ENCODE measurements at regions of chr13 and their contacts with region 1.

Region 1: DNA sequence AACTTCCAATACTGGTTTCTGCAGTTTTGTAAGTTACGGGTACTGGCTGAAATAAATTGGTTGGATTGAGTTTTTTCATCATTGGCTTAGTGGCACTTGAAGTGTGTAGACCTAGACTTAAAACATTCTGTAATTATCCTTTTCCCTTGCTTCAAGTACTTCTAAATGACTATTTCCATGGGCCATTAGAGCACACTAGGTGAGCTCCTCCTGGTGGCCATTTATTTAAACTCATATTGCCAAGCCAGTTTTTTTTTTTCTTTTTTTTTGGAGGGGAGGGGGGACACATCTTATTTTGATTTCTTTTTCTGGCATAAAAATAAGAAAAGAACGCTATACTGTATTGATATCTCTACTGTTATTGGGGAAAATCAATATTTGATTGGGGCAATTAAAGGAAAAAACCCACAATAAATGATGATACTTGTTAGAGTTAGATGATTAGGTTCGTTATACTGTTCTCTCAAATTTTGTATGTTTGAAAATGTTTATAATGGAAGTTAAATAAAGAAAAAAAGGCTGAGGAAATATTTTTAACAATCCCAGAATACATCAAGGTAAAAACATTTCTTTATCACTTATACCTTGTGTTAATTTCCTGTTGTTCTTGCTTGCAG is 82.9 kb downstream of the PDS5B start:
- DNase-seq: no peak
- H3K4me3 ChIP-seq: no peak overlapping the region
- H3K27ac ChIP-seq: no peak overlapping the region
- H3K27me3 ChIP-seq: no peaks in the 10 kb centered on the region
- CTCF ChIP-seq: peak; percentile 78

Region 2: DNA sequence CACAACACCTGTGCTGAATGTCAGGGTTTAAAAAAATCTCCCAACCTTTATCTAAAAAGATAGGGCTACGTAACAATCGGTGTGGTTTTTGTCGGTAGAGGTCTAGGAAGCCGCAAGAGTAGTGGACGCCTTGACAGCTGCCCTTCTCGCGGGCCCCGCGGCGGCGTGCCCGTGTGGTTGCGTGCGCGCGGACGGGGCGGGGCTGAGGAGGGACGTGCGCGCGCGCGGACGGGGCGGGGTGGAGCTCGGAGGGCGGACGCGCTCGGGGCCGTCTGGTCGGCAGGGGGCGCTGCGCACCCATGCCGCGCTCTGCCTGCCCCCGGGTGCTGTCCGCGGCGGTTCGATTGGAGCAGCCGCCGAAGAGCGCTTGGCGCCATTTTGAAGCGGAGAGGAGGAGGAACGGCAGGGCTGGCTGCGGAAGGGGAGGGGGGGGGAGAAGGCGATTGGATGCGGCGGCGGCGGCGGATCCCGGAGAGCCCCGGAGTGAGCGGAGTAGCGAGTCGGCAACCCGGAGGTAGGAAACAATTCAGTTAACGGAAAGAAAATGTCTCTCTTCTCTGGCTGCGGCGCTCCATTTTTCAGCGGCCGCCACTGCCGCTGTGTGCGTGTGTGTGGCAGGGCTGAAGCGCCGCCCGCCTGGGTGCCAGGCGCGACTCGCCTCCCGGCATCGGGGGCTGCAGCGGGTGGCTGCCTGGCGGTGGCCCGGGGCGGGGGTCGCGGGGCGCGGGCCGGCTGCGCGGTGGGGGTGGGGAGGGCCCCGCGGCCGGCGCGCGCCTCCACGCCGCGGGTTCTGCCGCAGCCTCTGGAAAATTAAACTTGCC is 82.8 kb before region 1 on chr13 and contains the start of gene PDS5B:
- CTCF ChIA-PET with region 1: interaction called, 10 read pairs
- POLR2A ChIA-PET with region 1: no interaction called
- DNase-seq: peak; percentile 86
- H3K4me3 ChIP-seq: peak within 1 kb of the TSS; percentile 87
- H3K27ac ChIP-seq: peak within 1 kb of the TSS; percentile 74
- H3K27me3 ChIP-seq: no peaks in the 10 kb centered on the region
- CTCF ChIP-seq: peak; percentile 61
- polyA plus RNA-seq, gene PDS5B: 12.0 and 16.7 TPM in 2 replicates

Region 3: GRCh38 chr13:32632343-32632909 is 36.7 kb before region 1 on chr13:
- CTCF ChIA-PET with region 1: no interaction called
- POLR2A ChIA-PET with region 1: no interaction called
- DNase-seq: no peak
- H3K4me3 ChIP-seq: no peak overlapping the region
- H3K27ac ChIP-seq: no peak overlapping the region
- H3K27me3 ChIP-seq: no peaks in the 10 kb centered on the region
- CTCF ChIP-seq: no peak

Region 4: GRCh38 chr13:32650705-32651311 is 18.3 kb before region 1 on chr13:
- CTCF ChIA-PET with region 1: interaction called, 48 read pairs
- POLR2A ChIA-PET with region 1: no interaction called
- DNase-seq: no peak
- H3K4me3 ChIP-seq: no peak overlapping the region
- H3K27ac ChIP-seq: no peak overlapping the region
- H3K27me3 ChIP-seq: no peaks in the 10 kb centered on the region
- CTCF ChIP-seq: peak; percentile 75

Region 5: GRCh38 chr13:32682740-32683139 is 13.6 kb after region 1 on chr13:
- CTCF ChIA-PET with region 1: interaction called, 14 read pairs
- POLR2A ChIA-PET with region 1: no interaction called
- DNase-seq: no peak
- H3K4me3 ChIP-seq: no peak overlapping the region
- H3K27ac ChIP-seq: no peak overlapping the region
- H3K27me3 ChIP-seq: no peaks in the 10 kb centered on the region
- CTCF ChIP-seq: no peak

Region 6: DNA sequence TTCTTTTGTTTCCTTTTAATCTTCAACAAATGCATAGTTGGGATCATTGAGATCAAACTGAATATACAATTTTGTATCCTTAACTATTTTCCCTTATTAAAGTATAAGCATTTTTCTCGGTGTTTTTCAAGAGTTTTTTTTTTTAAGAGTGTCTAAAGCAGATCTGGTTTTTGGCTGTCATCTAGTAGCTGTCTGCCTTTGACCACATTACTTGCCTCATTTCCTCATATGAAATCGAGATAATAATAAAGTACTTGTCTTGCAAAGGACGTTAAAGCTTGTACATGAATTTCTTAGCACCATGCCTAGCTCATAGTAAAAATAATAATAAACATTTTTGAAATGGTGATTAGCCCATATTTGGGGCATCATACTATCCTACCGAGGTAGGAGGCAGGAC is 38.3 kb after region 1 on chr13:
- CTCF ChIA-PET with region 1: no interaction called
- POLR2A ChIA-PET with region 1: no interaction called
- DNase-seq: no peak
- H3K4me3 ChIP-seq: no peak overlapping the region
- H3K27ac ChIP-seq: no peak overlapping the region
- H3K27me3 ChIP-seq: no peaks in the 10 kb centered on the region
- CTCF ChIP-seq: no peak

Region 7: DNA sequence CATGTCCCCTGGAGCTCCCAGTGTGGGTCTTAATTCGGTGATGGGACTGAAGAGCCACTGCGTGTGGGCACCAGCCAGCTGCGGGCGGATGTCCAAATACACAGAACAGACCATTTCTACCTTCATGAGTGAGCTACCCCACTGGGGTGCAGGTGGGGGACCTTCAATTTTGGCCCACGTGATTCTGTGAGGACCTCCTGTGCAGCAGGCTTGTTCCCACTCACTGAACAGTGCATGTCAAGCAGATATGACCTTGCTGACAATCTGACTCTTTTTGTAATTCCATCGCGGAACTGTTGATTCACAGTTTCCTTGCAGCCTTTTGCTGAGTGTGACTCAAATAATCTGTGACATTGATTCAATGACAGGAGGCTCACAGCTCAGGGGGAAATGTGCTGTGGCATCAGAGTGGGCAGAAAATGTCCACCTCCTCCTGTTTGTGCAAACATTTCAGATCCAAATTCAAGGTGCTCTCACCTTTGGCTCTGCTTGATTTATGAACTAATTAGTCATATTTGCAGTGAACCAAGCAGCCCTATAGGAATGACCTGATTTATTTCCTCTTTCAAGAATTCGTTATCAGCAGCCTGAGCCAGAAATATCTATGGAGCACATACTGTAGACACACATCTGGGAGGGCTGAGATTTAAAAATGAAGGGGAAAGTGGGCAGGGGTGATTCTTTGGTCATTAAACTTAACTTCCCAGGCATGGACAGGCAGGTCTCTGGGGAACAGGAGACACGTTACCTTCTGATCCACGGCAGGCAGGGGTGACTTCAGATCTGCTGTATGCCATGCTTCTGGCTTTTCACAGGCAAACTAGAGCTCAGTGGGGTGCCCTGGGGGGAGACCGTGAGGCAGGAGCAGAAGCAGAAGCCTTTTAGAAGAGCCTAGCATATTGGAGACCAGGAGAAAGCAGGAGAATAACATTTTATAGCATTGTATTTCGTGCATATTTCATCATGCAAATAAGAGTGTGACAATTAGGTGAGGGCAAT is 177.1 kb after region 1 on chr13:
- CTCF ChIA-PET with region 1: interaction called, 11 read pairs
- POLR2A ChIA-PET with region 1: no interaction called
- DNase-seq: no peak
- H3K4me3 ChIP-seq: no peak overlapping the region
- H3K27ac ChIP-seq: no peak overlapping the region
- H3K27me3 ChIP-seq: no peaks in the 10 kb centered on the region
- CTCF ChIP-seq: no peak

Measured in AG04450 (cell line).